ENCODE measurements at regions of chr19 and their contacts with region 1.

Region 1: GRCh38 chr19:18985257-18985656 is 44.2 kb upstream of the HOMER3 start:
- DNase-seq: no peak
- H3K4me3 Mint-ChIP-seq: no peak overlapping the region
- H3K27ac Mint-ChIP-seq: no peak overlapping the region
- H3K4me1 Mint-ChIP-seq: no peaks in the 10 kb centered on the region
- H3K27me3 Mint-ChIP-seq: no peaks in the 10 kb centered on the region
- CTCF ChIP-seq: no peak

Region 2: DNA sequence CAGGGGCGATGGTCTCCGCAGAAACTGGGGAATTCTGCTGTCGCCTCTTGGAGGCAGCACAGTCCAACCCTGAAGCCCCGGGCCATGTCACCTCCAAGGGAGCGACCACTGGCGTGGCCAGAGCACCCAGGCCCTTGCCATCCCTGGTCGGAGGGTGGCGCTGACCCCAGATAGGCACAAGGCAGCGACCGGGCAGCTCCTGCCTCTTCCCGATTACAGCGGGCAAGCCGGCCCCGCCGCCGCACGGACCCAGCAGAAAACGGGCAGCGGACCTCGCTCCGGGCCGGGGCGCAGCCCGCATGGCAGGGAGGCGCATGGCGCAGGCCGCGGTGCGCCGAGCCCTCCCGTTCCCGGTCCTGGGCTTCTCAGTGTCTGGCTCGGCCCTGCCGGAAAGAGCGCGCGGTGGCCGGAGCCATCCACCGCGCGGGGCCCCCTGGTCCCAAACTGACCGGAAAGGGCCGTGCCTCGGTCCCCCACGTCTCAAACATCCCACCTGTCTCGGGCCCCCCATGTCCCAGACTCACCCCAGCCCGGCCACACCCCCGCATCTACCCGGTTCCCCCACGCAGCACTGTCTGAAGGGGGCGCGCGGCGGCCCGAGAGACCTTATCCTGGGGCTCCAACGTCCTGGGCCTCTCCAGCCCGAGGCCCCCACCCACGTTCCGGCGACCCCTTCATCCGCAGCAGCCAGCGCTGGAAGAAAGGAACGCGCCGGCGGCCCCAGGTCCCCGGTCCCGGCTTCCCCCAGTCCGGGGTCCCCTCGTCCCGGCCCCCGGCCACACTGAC is 90.0 kb before region 1 on chr19:
- CTCF ChIA-PET with region 1: interaction called, 4 read pairs
- intact Hi-C with region 1: loop called (anchors 5 kb)
- DNase-seq: peak; percentile 72
- H3K4me3 Mint-ChIP-seq: peak overlapping the region; percentile 63
- H3K27ac Mint-ChIP-seq: no peak overlapping the region
- H3K4me1 Mint-ChIP-seq: no peaks in the 10 kb centered on the region
- H3K27me3 Mint-ChIP-seq: no peaks in the 10 kb centered on the region
- CTCF ChIP-seq: peak; percentile 42

Region 3: GRCh38 chr19:18919086-18919899 is 66.0 kb before region 1 on chr19 and contains the starts of genes COPE and DDX49:
- CTCF ChIA-PET with region 1: interaction called, 10 read pairs
- intact Hi-C with region 1: no loop called
- DNase-seq: peak; percentile 90
- H3K4me3 Mint-ChIP-seq: peak within 1 kb of the TSS; percentile 86
- H3K27ac Mint-ChIP-seq: peak within 1 kb of the TSS; percentile 85
- H3K4me1 Mint-ChIP-seq: peaks cover 6% of the 10 kb centered on the region
- H3K27me3 Mint-ChIP-seq: no peaks in the 10 kb centered on the region
- CTCF ChIP-seq: no peak
- total RNA-seq, gene COPE: 137 and 143 TPM in 2 replicates
- total RNA-seq, gene DDX49: 34.4 and 37.3 TPM in 2 replicates

Measured in Calu3 (cell line).